IMR-90 (cell line): ENCODE measurements at regions of chr2 and their contacts with region 1.

Region 1: GRCh38 chr2:174846941-174847938 is 83.0 kb upstream of the CHRNA1 start:
- DNase-seq: peak; percentile 97
- ATAC-seq: peak; percentile 96
- H3K4me3 ChIP-seq: peak overlapping the region; percentile 65
- H3K27ac ChIP-seq: peak overlapping the region; percentile 75; the same call in 1 of the 2 replicates
- H3K4me1 ChIP-seq: peaks cover 3% of the 10 kb centered on the region; the same call in 1 of the 2 replicates
- H3K27me3 ChIP-seq: no peaks in the 10 kb centered on the region
- CTCF ChIP-seq: no peak
- POLR2A ChIP-seq: peak; percentile 37; the same call in 1 of the 2 replicates
- RAD21 ChIP-seq: no peak

Region 2: DNA sequence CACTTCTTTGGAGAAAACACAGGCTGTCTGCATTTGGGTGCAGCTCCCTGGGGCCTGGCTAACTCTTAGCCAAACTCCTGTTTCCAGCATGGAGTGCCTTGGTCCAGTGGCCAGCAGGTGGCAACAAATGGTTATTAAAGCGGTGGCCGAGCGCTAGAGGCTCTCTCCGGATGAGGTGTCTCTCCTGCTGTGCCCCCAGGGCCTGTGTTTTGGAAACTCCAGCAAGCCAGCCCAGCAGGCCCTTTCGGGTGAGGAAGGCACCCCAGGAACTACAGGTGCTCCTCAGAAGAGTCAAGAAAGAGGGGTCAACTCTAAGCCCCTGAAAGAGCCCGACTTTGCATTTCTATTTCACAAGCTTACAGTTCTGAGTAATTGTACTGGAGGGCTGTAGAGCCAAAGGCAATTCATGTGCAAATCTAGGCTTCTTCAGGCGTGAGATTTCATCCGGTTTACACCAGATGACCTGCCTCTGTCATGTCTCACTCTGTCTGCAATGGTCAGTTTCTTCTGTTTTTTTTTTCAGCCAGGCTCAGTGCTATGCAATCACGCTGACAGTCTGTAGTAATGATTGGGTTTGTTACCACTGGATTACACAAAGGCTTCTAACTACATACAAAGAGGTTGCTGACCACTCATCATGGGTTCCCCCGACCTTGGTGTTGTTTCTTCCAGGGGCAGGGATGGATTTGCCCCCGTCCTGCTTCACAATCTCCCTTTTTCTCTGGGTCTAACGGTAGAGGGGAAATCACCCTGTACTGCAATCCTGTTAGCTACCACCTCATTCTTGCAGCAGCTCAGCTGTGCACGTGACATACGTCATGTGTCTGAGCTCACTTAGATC is 75.4 kb before region 1 on chr2:
- CTCF ChIA-PET with region 1: interaction called, 3 read pairs
- POLR2A ChIA-PET with region 1: interaction called, 3 read pairs
- dilution Hi-C with region 1: no loop called
- in situ Hi-C with region 1: loop called (anchors 5 kb)
- intact Hi-C with region 1: loop called (anchors 2 kb)
- DNase-seq: peak; percentile 82
- ATAC-seq: peak; percentile 86
- H3K4me3 ChIP-seq: no peak overlapping the region
- H3K27ac ChIP-seq: peak overlapping the region; percentile 93
- H3K4me1 ChIP-seq: peaks cover 24% of the 10 kb centered on the region
- H3K27me3 ChIP-seq: no peaks in the 10 kb centered on the region
- CTCF ChIP-seq: peak; percentile 94
- POLR2A ChIP-seq: no peak
- RAD21 ChIP-seq: peak; percentile 94

Region 3: DNA sequence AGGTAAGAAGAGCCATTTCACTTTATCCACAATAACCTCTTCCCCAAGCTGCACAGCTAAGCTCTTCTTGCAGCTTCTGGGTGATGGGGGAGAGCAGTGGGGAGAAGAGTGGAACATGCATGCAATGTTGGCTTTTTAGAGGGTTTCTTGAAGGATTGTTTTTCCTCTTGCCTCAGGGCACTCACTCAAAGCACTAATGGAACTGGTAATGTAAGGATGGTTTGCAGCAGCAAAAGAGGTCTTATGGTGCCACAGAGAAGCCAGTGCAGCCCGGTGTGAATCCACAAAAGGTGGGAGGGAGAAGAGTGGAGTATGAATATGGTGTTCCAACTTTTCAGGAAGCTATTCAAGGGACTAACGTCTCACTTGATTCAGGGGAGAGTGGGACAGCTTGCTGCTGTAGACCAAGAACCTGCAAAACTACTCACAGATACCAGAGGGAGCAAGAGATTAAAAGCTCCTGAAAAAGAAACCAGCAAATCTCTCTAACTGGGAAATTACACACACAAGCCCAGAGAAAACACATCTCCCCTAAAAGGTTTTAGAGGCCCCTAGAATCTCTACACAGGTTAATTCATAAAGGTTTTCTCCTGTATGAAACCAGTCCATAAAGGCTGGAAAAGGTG is 41.5 kb after region 1 on chr2:
- CTCF ChIA-PET with region 1: no interaction called
- POLR2A ChIA-PET with region 1: interaction called, 4 read pairs
- dilution Hi-C with region 1: no loop called
- in situ Hi-C with region 1: no loop called
- intact Hi-C with region 1: loop called (anchors 5 kb)
- DNase-seq: peak; percentile 18
- ATAC-seq: peak; percentile 49; the same call in 1 of the 2 replicates
- H3K4me3 ChIP-seq: no peak overlapping the region
- H3K27ac ChIP-seq: no peak overlapping the region
- H3K4me1 ChIP-seq: no peaks in the 10 kb centered on the region
- H3K27me3 ChIP-seq: no peaks in the 10 kb centered on the region
- CTCF ChIP-seq: peak; percentile 22; the same call in 1 of the 2 replicates
- POLR2A ChIP-seq: no peak
- RAD21 ChIP-seq: peak; percentile 16; the same call in 1 of the 2 replicates

Region 4: GRCh38 chr2:174971865-174972781 is 124.9 kb after region 1 on chr2:
- CTCF ChIA-PET with region 1: no interaction called
- POLR2A ChIA-PET with region 1: no interaction called
- dilution Hi-C with region 1: no loop called
- in situ Hi-C with region 1: no loop called
- intact Hi-C with region 1: loop called (anchors 5 kb)
- DNase-seq: peak; percentile 75
- ATAC-seq: peak; percentile 71
- H3K4me3 ChIP-seq: no peak overlapping the region; the same call in 1 of the 2 replicates
- H3K27ac ChIP-seq: peak overlapping the region; percentile 82
- H3K4me1 ChIP-seq: peaks cover 15% of the 10 kb centered on the region; the same call in 1 of the 2 replicates
- H3K27me3 ChIP-seq: no peaks in the 10 kb centered on the region
- CTCF ChIP-seq: no peak
- POLR2A ChIP-seq: no peak
- RAD21 ChIP-seq: no peak